Sigmoid colon (tissue), 7 donors: ENCODE measurements at regions of chr17 and their contacts with region 1.

Region 1: GRCh38 chr17:5584383-5585286 is at the start of gene NLRP1:
- DNase-seq: peak; percentile 92
- H3K4me3 ChIP-seq: peak within 1 kb of the TSS; percentile 37 to 52 (median 50)
- H3K27ac ChIP-seq: peak within 1 kb of the TSS; percentile 75 to 84 (median 80)
- H3K4me1 ChIP-seq: peaks cover 0 to 32% (median 20%) of the 10 kb centered on the region in 4 donors
- H3K27me3 ChIP-seq: no peaks in the 10 kb centered on the region
- CTCF ChIP-seq: no peak
- EP300 ChIP-seq: no peak
- POLR2A ChIP-seq: peak; percentile 21 to 47
- total RNA-seq, gene NLRP1: 19.1 to 70.3 (median 28.1) TPM

Region 2: GRCh38 chr17:5545051-5545987 is 39.3 kb before region 1 on chr17:
- intact Hi-C with region 1: no loop called
- DNase-seq: no peak
- H3K4me3 ChIP-seq: no peak overlapping the region
- H3K27ac ChIP-seq: no peak overlapping the region
- H3K4me1 ChIP-seq: peaks cover 0 to 10% (median 8%) of the 10 kb centered on the region in 4 donors
- H3K27me3 ChIP-seq: no peaks in the 10 kb centered on the region
- CTCF ChIP-seq: no peak
- EP300 ChIP-seq: no peak
- POLR2A ChIP-seq: no peak

Region 3: DNA sequence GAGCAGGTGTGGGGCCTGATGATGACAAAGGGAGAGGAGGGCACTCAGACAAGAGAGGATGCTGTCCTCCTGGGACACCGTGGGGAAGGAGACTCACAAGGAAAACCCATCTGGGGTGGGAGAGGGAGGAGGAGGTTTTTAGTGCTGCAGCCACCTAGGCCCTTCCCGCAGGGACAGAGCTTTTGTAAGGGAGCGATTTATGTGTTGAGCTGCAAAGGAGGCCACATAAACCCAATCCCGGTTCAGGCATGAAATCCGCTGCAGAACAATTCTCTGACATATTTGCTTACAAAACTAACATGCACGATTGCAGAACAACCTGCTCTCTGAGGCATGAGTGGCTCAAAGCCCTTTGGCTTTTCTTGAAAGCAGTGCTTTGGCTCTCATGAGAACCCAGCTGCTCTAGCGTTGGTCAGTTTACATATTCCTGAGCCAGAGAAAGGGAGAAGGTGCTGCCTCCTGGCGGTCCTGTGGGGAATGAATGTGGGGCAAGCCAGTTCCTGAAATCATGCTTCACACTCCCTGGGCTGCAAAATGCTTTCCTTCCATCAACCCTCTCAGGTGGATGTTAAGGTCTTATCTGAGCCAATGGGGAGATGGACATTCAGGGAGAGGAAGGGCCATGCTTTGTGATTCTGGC is 122.1 kb after region 1 on chr17:
- intact Hi-C with region 1: loop called (anchors 5 kb)
- DNase-seq: no peak
- H3K4me3 ChIP-seq: no peak overlapping the region
- H3K27ac ChIP-seq: no peak overlapping the region
- H3K4me1 ChIP-seq: no peaks in the 10 kb centered on the region
- H3K27me3 ChIP-seq: peaks cover 0 to 17% (median 0%) of the 10 kb centered on the region in 3 donors
- CTCF ChIP-seq: peak in 3 of 4 experiments; percentile 40 to 43 (median 42)
- EP300 ChIP-seq: no peak
- POLR2A ChIP-seq: no peak

Region 4: DNA sequence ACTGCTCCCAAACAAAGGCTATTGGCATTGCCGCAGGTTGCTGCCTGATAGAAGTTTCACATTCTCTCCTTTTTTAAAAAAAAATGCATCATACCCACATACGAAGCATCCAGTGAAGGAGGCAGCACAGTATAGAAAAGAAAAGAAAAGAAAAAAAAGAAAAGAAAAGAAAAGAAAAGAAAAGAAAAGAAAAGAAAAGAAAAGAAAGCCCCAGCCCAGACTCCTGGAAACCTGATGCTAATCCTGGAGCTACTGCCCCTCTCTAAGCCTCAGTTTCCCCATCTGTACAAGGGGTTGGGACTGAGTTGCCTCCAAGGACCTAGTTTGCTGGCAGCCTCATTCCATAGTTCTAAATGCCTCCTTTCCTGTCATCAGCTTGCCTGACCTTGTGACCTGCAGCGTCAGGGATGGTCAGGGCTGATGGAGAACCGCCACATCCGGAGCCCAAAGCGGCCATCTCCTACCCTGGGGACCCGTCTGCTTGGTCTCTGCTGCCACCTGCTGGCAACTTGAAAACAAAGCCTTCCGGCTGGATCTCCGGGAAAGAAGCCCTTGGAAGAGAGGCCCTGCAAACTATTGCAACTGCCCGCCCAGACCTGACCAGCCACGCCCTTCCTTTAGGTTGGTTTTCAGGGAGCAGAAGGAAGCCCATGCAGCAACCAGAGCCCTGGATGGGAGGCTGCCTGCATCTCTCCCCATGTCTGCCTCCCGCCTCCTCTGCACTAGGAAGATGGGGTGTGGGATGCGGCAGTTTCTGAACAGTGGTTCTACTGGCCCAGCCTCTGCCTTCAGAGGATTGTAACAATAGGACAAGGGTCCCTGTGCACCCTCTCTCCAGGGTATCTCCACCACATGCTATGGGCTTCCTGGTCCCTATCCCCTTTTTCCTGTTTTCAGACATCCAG is 837.3 kb after region 1 on chr17:
- intact Hi-C with region 1: loop called (anchors 1 kb)
- DNase-seq: peak; percentile 83
- H3K4me3 ChIP-seq: no peak overlapping the region
- H3K27ac ChIP-seq: no peak overlapping the region
- H3K4me1 ChIP-seq: peaks cover 0 to 4% (median 0%) of the 10 kb centered on the region in 4 donors
- H3K27me3 ChIP-seq: peaks cover 0 to 32% (median 4%) of the 10 kb centered on the region in 3 donors
- CTCF ChIP-seq: peak; percentile 59 to 83 (median 71)
- EP300 ChIP-seq: no peak
- POLR2A ChIP-seq: no peak

Region 5: GRCh38 chr17:6435968-6436367 is 851.3 kb after region 1 on chr17:
- intact Hi-C with region 1: loop called (anchors 5 kb)
- DNase-seq: no peak
- H3K4me3 ChIP-seq: no peak overlapping the region
- H3K27ac ChIP-seq: no peak overlapping the region
- H3K4me1 ChIP-seq: no peaks in the 10 kb centered on the region
- H3K27me3 ChIP-seq: peaks cover 0 to 40% (median 3%) of the 10 kb centered on the region in 3 donors
- CTCF ChIP-seq: peak; percentile 36 to 78 (median 62)
- EP300 ChIP-seq: no peak
- POLR2A ChIP-seq: no peak